Aorta (tissue), 5 donors: ENCODE measurements at regions of chr1 and their contacts with region 1.

Region 1: GRCh38 chr1:94805912-94806311 is 14.2 kb upstream of the SLC44A3 start:
- DNase-seq: no peak
- ATAC-seq: peak; percentile 80
- H3K4me3 ChIP-seq: no peak overlapping the region
- H3K27ac ChIP-seq: no peak overlapping the region
- H3K4me1 ChIP-seq: no peaks in the 10 kb centered on the region
- H3K27me3 ChIP-seq: no peaks in the 10 kb centered on the region

Region 2: GRCh38 chr1:94481473-94481933 is 324.4 kb before region 1 on chr1:
- intact Hi-C with region 1: loop called in 1 of 2 experiments (anchors 2 kb)
- DNase-seq: peak in 1 of 2 donors; percentile 43
- ATAC-seq: peak; percentile 87
- H3K4me3 ChIP-seq: no peak overlapping the region
- H3K27ac ChIP-seq: no peak overlapping the region
- H3K4me1 ChIP-seq: no peaks in the 10 kb centered on the region
- H3K27me3 ChIP-seq: no peaks in the 10 kb centered on the region

Region 3: GRCh38 chr1:94522304-94522703 is 283.6 kb before region 1 on chr1:
- intact Hi-C with region 1: loop called (anchors 2 kb)
- DNase-seq: no peak
- ATAC-seq: peak; percentile 65
- H3K4me3 ChIP-seq: no peak overlapping the region
- H3K27ac ChIP-seq: no peak overlapping the region
- H3K4me1 ChIP-seq: peaks cover 0 to under 1% of the 10 kb centered on the region in 2 donors
- H3K27me3 ChIP-seq: no peaks in the 10 kb centered on the region

Region 4: GRCh38 chr1:94936861-94937620 is 131.1 kb after region 1 on chr1:
- intact Hi-C with region 1: no loop called
- DNase-seq: no peak
- ATAC-seq: no peak
- H3K4me3 ChIP-seq: no peak overlapping the region
- H3K27ac ChIP-seq: no peak overlapping the region
- H3K4me1 ChIP-seq: peaks cover 0 to 3% of the 10 kb centered on the region in 2 donors
- H3K27me3 ChIP-seq: no peaks in the 10 kb centered on the region